ENCODE measurements at regions of chr11 and their contacts with region 1.

Region 1: DNA sequence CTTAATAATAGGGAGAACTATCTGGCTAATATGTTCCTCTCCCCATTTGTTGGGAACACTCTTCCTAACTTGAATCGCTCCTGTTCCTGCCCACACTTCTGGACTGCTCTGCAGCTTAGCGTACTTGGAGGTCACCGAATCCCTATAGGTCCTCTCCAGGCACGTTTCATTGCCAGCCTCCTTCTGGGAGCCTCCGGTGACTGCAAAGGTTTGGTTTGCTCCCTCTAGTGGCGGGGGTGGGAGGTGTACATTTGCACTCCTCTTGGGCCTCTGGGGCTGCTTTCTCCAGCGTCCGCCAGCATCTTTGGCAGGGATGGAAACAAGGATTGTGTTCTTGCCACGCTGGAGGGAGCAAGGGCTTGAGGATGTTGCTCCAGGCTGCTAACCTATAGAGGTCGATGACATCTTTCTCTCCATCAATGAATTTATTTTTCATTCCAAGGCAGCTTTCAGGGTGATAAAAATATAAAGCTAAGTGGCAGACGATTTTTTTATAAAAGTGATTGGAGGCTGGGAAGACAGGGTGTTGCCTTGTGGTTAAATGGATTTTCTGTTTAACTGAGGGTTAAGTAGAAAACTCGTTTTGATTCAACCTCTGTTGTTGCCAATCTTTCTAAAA is 48.7 kb downstream of the TSPAN18 start:
- DNase-seq: peak; percentile 34 to 68 (median 49)
- ATAC-seq: peak; percentile 78
- H3K4me3 ChIP-seq: no peak overlapping the region
- H3K4me3 Mint-ChIP-seq: peak overlapping the region in 1 of 10 donors; percentile 35
- H3K27ac ChIP-seq: no peak overlapping the region
- H3K27ac Mint-ChIP-seq: peak overlapping the region in 4 of 9 donors; percentile 13 to 72 (median 34)
- H3K4me1 ChIP-seq: peaks cover 0 to 8% of the 10 kb centered on the region in 2 donors
- H3K4me1 Mint-ChIP-seq: peaks cover 5 to 46% (median 32%) of the 10 kb centered on the region in 7 donors
- H3K27me3 ChIP-seq: no peaks in the 10 kb centered on the region
- H3K27me3 Mint-ChIP-seq: no peaks in the 10 kb centered on the region

Region 2: GRCh38 chr11:44315947-44316658 is 459.4 kb before region 1 on chr11:
- CTCF ChIA-PET with region 1: no interaction called
- POLR2A ChIA-PET with region 1: no interaction called
- intact Hi-C with region 1: no loop called
- DNase-seq: no peak
- ATAC-seq: no peak
- H3K4me3 ChIP-seq: no peak overlapping the region
- H3K4me3 Mint-ChIP-seq: peak overlapping the region in 8 of 10 donors; percentile 7 to 77 (median 64)
- H3K27ac ChIP-seq: no peak overlapping the region
- H3K27ac Mint-ChIP-seq: peak overlapping the region in 1 of 9 donors; percentile 58
- H3K4me1 ChIP-seq: no peaks in the 10 kb centered on the region
- H3K4me1 Mint-ChIP-seq: peaks cover 9 to 31% (median 20%) of the 10 kb centered on the region in 7 donors
- H3K27me3 ChIP-seq: peaks cover 3 to 24% of the 10 kb centered on the region in 2 donors
- H3K27me3 Mint-ChIP-seq: peaks cover 87 to 96% (median 91%) of the 10 kb centered on the region in 5 donors

Region 3: DNA sequence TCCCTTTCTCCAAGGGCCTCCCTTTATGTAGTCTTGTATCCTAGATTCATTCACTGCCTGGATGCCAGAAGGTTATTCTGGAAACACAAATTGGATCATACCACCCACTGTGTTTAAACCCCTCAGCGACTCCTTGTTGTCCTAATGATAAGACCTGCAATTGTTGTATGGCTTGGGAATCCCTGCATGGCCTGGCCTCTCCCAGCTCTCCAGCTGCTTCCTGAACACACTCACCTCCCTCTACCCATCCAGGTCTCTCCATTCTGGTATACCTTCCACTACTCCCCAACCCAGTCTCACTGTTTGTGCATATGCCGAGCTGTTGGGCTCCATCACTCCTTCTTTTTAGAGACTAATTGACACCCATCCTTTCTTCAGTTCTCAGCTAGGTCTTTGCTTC is 341.3 kb before region 1 on chr11:
- CTCF ChIA-PET with region 1: no interaction called
- POLR2A ChIA-PET with region 1: no interaction called
- intact Hi-C with region 1: no loop called
- DNase-seq: no peak
- ATAC-seq: no peak
- H3K4me3 ChIP-seq: no peak overlapping the region
- H3K4me3 Mint-ChIP-seq: no peak overlapping the region
- H3K27ac ChIP-seq: no peak overlapping the region
- H3K27ac Mint-ChIP-seq: no peak overlapping the region
- H3K4me1 ChIP-seq: no peaks in the 10 kb centered on the region
- H3K4me1 Mint-ChIP-seq: no peaks in the 10 kb centered on the region
- H3K27me3 ChIP-seq: no peaks in the 10 kb centered on the region
- H3K27me3 Mint-ChIP-seq: peaks cover 15 to 63% (median 25%) of the 10 kb centered on the region in 5 donors

Region 4: GRCh38 chr11:44621140-44621681 is 154.3 kb before region 1 on chr11:
- CTCF ChIA-PET with region 1: interaction called, 10 read pairs
- POLR2A ChIA-PET with region 1: no interaction called
- intact Hi-C with region 1: loop called (anchors 1 to 2 kb)
- DNase-seq: peak; percentile 33 to 64 (median 55)
- ATAC-seq: peak; percentile 76
- H3K4me3 ChIP-seq: no peak overlapping the region
- H3K4me3 Mint-ChIP-seq: no peak overlapping the region
- H3K27ac ChIP-seq: no peak overlapping the region
- H3K27ac Mint-ChIP-seq: peak overlapping the region in 1 of 9 donors; percentile 12
- H3K4me1 ChIP-seq: peaks cover 0 to 20% of the 10 kb centered on the region in 2 donors
- H3K4me1 Mint-ChIP-seq: peaks cover 20 to 44% (median 30%) of the 10 kb centered on the region in 7 donors
- H3K27me3 ChIP-seq: no peaks in the 10 kb centered on the region
- H3K27me3 Mint-ChIP-seq: no peaks in the 10 kb centered on the region

Region 5: GRCh38 chr11:44634401-44635281 is 140.8 kb before region 1 on chr11:
- CTCF ChIA-PET with region 1: interaction called, 4 read pairs
- POLR2A ChIA-PET with region 1: no interaction called
- intact Hi-C with region 1: loop called in 1 of 2 experiments (anchors 1 kb)
- DNase-seq: peak in 1 of 9 donors; percentile 17
- ATAC-seq: no peak
- H3K4me3 ChIP-seq: no peak overlapping the region
- H3K4me3 Mint-ChIP-seq: no peak overlapping the region
- H3K27ac ChIP-seq: no peak overlapping the region
- H3K27ac Mint-ChIP-seq: no peak overlapping the region
- H3K4me1 ChIP-seq: no peaks in the 10 kb centered on the region
- H3K4me1 Mint-ChIP-seq: peaks cover 2 to 23% (median 11%) of the 10 kb centered on the region in 7 donors
- H3K27me3 ChIP-seq: peaks cover 0 to 3% of the 10 kb centered on the region in 2 donors
- H3K27me3 Mint-ChIP-seq: peaks cover 0 to 27% (median 0%) of the 10 kb centered on the region in 5 donors

Region 6: GRCh38 chr11:44658506-44658850 is 117.0 kb before region 1 on chr11:
- CTCF ChIA-PET with region 1: interaction called, 13 read pairs
- POLR2A ChIA-PET with region 1: no interaction called
- intact Hi-C with region 1: loop called in 1 of 2 experiments (anchors 1 kb)
- DNase-seq: peak in 5 of 9 donors; percentile 14 to 37 (median 30)
- ATAC-seq: peak; percentile 29
- H3K4me3 ChIP-seq: no peak overlapping the region
- H3K4me3 Mint-ChIP-seq: peak overlapping the region in 1 of 10 donors; percentile 16
- H3K27ac ChIP-seq: no peak overlapping the region
- H3K27ac Mint-ChIP-seq: peak overlapping the region in 2 of 9 donors; percentile 54 to 58
- H3K4me1 ChIP-seq: peaks cover 0 to 15% of the 10 kb centered on the region in 2 donors
- H3K4me1 Mint-ChIP-seq: peaks cover 16 to 32% (median 26%) of the 10 kb centered on the region in 7 donors
- H3K27me3 ChIP-seq: no peaks in the 10 kb centered on the region
- H3K27me3 Mint-ChIP-seq: peaks cover 0 to 24% (median 0%) of the 10 kb centered on the region in 5 donors

Region 7: DNA sequence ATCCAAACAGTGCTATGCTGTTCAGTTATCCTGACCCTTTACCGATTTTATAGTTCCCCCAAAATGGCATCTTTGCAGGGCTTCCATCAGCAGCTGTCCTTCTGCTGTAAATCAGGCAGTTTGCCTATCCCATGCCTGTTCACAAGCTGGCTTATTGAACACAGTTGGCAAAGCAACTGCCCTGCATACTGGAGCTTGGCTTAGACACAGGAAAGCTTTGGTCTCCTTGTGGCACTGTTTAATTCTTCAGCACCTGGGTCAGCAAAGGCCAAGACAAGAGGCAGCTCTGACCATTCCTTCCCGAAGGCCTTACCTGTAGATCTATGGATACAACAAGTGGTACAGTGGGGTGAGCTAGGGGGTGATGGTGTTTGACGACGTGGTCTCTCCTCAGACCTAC is 16.5 kb before region 1 on chr11:
- CTCF ChIA-PET with region 1: interaction called, 3 read pairs
- POLR2A ChIA-PET with region 1: no interaction called
- intact Hi-C with region 1: loop called in 1 of 2 experiments (anchors 2 kb)
- DNase-seq: no peak
- ATAC-seq: no peak
- H3K4me3 ChIP-seq: no peak overlapping the region
- H3K4me3 Mint-ChIP-seq: no peak overlapping the region
- H3K27ac ChIP-seq: no peak overlapping the region
- H3K27ac Mint-ChIP-seq: no peak overlapping the region
- H3K4me1 ChIP-seq: no peaks in the 10 kb centered on the region
- H3K4me1 Mint-ChIP-seq: peaks cover 2 to 35% (median 29%) of the 10 kb centered on the region in 7 donors
- H3K27me3 ChIP-seq: no peaks in the 10 kb centered on the region
- H3K27me3 Mint-ChIP-seq: peaks cover 0 to 3% (median 0%) of the 10 kb centered on the region in 5 donors

Region 8: DNA sequence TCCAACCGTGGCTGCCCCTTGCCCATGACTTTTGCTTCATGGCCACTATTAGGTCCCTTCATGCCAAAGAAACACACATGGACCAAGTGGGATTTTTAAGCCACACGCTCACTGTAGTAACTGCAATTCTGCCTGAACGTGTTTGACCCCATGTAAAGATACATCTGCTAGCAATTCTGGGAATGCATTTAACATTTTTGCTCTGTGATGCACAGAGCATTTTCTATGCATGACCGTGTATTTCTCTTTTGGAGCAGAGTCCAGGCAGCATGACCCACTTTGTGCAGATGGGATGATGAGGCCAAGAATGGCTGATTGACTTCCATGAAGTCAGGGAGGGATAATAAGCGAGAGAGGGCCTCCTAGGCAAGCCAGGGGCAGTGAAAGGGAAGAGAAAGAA is 66.7 kb after region 1 on chr11:
- CTCF ChIA-PET with region 1: no interaction called
- POLR2A ChIA-PET with region 1: no interaction called
- intact Hi-C with region 1: no loop called
- DNase-seq: no peak
- ATAC-seq: no peak
- H3K4me3 ChIP-seq: no peak overlapping the region
- H3K4me3 Mint-ChIP-seq: no peak overlapping the region
- H3K27ac ChIP-seq: no peak overlapping the region
- H3K27ac Mint-ChIP-seq: no peak overlapping the region
- H3K4me1 ChIP-seq: no peaks in the 10 kb centered on the region
- H3K4me1 Mint-ChIP-seq: peaks cover 0 to 4% (median 0%) of the 10 kb centered on the region in 7 donors
- H3K27me3 ChIP-seq: no peaks in the 10 kb centered on the region
- H3K27me3 Mint-ChIP-seq: peaks cover 0 to 4% (median 0%) of the 10 kb centered on the region in 5 donors

Region 9: GRCh38 chr11:44943118-44943517 is 167.6 kb after region 1 on chr11:
- CTCF ChIA-PET with region 1: no interaction called
- POLR2A ChIA-PET with region 1: no interaction called
- intact Hi-C with region 1: no loop called
- DNase-seq: peak in 1 of 9 donors; percentile 35
- ATAC-seq: peak; percentile 73
- H3K4me3 ChIP-seq: no peak overlapping the region
- H3K4me3 Mint-ChIP-seq: peak overlapping the region in 2 of 10 donors; percentile 12 to 37
- H3K27ac ChIP-seq: no peak overlapping the region
- H3K27ac Mint-ChIP-seq: no peak overlapping the region
- H3K4me1 ChIP-seq: peaks cover 0 to 6% of the 10 kb centered on the region in 2 donors
- H3K4me1 Mint-ChIP-seq: peaks cover 0 to 23% (median 10%) of the 10 kb centered on the region in 7 donors
- H3K27me3 ChIP-seq: no peaks in the 10 kb centered on the region
- H3K27me3 Mint-ChIP-seq: peaks cover 0 to 14% (median 0%) of the 10 kb centered on the region in 5 donors

Measured in naive thymus-derived CD4-positive, alpha-beta T cell (primary cell).